ENCODE measurements at regions of chr7 and their contacts with region 1.

Region 1: DNA sequence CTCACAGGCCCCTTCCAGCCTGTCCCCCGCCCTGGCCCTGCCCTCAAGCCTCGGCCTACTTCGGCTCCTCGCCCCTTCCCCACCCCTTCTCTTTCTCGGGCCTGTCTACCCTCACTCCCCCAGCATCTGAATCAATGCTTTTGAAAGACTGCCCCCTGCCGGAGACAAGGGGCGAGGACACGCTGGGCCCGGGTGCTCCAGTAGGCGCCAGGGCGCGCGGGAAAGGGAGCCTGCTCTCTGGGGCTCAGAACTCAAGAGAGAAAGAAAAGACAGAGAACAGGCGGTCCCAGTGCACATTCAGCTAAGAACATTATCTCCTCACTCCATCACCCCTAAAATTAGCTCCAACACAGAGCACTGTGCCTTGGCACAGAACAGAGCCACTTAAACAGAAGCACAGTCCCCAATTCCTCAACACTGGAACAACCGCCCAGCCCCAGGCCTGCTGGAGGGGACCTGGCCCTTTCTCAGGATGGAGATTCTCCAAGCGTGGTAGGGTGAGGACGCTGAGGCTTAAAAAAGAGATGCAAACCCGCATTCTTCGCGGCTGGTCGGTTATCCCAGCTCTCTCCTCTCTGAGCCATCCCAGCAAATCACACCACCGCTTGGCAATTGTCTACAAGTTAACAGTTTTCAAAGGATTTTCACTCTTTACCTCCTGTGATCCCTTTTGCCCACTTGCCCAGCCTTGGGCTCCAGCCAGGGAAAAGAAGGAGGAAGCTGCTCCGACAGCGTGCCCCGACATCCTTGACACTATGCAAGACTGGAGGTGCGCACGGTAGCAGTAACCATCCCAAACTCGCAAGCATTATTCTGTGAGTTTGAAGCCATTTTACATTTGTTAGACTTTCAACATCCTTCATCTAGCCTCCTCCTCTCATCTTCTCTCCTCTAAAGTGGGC is 2.1 kb downstream of the GIGYF1 start:
- DNase-seq: peak; percentile 88
- ATAC-seq: peak; percentile 77
- H3K4me3 Mint-ChIP-seq: peak overlapping the region; percentile 88
- H3K27ac Mint-ChIP-seq: peak overlapping the region; percentile 91
- H3K4me1 Mint-ChIP-seq: peaks cover 54% of the 10 kb centered on the region
- H3K27me3 Mint-ChIP-seq: no peaks in the 10 kb centered on the region
- CTCF ChIP-seq: peak; percentile 90

Region 2: DNA sequence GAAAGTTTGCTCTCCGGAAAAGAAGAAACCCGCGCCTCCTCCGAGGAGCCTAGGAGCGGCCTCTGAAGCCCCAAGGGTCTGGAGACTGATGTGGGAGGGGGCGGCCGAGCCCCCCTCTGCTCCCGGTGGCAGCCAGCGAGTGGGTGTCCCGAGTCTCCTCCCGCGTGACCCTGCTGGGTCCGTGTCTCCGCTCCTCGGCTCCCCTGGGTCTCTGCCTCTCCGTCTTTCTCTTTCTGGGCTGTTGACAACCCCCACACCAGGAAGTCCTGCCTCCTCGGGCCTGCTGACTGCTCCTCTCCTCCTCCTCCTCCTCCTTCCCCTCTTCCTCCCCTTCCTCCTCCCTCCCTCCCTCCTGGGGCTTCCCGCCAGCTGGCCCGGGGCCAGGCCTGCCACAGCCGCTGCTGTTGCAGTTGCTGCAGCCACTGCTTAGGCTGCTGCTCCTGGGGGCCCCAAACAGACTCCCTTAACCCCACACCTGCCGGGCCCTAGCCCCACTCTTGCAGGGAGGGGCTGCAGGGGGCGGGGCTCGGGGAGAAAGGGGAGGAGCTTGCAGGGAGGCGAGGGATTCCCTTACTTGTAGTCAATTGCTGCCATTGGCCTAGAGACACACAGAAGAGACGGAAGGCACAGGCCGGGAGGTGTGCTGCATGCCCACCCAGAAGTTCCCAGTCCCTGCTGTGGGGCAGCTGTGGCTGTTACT is 212.8 kb before region 1 on chr7 and contains the start of gene TSC22D4:
- CTCF ChIA-PET with region 1: interaction called, 3 read pairs
- POLR2A ChIA-PET with region 1: no interaction called
- intact Hi-C with region 1: loop called (anchors 10 kb)
- DNase-seq: peak; percentile 94
- ATAC-seq: peak; percentile 76
- H3K4me3 Mint-ChIP-seq: peak within 1 kb of the TSS; percentile 94
- H3K27ac Mint-ChIP-seq: peak within 1 kb of the TSS; percentile 95
- H3K4me1 Mint-ChIP-seq: peaks cover 40% of the 10 kb centered on the region
- H3K27me3 Mint-ChIP-seq: no peaks in the 10 kb centered on the region
- CTCF ChIP-seq: no peak
- total RNA-seq, gene TSC22D4: 92.6 to 94.2 TPM

Region 3: DNA sequence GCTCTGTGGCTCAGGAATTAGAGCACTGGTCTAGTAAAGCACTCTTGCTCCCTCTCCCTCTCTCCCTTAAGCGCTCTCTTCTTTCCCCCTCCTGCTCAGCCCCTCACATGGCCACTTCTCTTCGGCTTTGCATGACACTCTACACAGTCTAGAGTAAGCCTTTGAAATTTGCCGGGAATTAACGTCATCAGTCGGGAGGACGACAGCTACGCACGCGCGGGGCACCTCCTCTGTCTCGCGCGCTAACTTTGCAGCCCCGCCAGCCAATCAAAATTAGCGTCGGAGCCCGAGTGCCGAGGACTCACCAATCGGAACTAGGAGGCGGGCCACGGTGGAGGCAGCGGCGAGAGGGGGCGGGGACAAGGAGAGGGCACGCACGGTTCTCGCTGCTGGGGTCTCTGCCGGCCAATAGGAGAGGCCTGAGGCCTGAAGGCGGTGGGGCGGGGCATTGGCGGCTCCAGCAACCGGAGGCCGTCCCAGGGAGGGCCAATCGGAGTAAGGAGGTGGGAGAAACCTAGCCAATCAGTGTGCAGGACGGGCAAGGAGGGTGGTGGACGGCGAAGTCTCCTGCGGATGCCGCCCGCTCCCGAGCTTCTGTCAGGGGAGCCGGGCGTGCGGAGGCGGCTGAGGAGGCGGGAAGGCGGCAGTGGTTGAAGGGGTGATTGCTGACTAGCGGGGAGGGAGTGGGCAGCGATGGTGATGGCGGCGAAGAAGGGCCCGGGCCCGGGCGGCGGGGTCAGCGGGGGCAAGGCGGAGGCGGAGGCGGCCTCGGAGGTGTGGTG is 153.1 kb before region 1 on chr7 and contains the start of gene AGFG2:
- CTCF ChIA-PET with region 1: no interaction called
- POLR2A ChIA-PET with region 1: no interaction called
- intact Hi-C with region 1: no loop called
- DNase-seq: peak; percentile 100
- ATAC-seq: peak; percentile 97
- H3K4me3 Mint-ChIP-seq: peak within 1 kb of the TSS; percentile 91
- H3K27ac Mint-ChIP-seq: peak within 1 kb of the TSS; percentile 97
- H3K4me1 Mint-ChIP-seq: peaks cover 37% of the 10 kb centered on the region
- H3K27me3 Mint-ChIP-seq: no peaks in the 10 kb centered on the region
- CTCF ChIP-seq: no peak
- total RNA-seq, gene AGFG2: 45.6 to 45.8 TPM

Region 4: DNA sequence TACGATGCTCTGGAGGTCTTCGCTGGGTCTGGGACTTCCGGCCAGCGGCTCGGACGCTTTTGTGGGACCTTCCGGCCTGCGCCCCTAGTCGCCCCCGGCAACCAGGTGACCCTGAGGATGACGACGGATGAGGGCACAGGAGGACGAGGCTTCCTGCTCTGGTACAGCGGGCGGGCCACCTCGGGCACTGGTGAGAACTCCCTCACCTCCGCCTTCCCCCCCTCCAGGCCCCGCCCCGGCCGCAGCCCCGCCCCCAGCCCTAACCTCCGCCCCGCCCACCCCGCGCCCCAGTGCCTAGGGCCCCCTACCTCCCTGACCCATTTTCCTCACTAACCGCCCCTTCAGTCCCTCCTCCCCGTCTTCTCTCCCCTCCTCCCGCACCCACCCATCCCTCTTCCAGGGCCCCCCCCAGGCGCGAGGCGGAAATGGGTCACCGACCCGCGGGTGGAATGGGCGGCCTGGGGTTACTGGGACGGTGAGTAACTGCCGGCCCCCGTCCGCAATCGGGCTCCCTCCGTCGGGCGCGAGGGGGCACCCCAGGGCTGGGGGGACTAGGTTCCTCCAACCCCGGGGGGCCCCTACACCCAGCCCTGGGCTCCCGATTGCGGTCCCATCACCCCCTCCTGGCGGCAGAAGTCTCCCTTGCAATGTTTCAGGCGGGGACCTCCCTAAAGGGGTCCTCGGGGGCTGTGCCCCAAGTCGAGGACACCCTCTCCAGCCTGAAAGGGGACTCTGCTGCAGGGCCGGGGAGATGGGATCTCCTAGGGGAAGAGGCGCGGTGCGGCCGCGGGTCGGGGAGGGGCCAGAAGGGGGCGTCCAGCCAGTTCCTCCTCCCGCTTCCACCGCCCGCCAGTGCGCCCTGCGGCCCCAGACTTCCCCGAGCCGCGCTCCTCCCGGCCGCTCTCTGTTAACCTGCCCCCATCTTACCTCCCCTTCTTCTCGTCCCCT is 87.6 kb before region 1 on chr7:
- CTCF ChIA-PET with region 1: interaction called, 14 read pairs
- POLR2A ChIA-PET with region 1: no interaction called
- intact Hi-C with region 1: no loop called
- DNase-seq: peak; percentile 87
- ATAC-seq: peak; percentile 81
- H3K4me3 Mint-ChIP-seq: peak overlapping the region; percentile 78
- H3K27ac Mint-ChIP-seq: peak overlapping the region; percentile 82
- H3K4me1 Mint-ChIP-seq: peaks cover 19% of the 10 kb centered on the region
- H3K27me3 Mint-ChIP-seq: peaks cover 3% of the 10 kb centered on the region
- CTCF ChIP-seq: peak; percentile 72

Region 5: GRCh38 chr7:100626530-100627237 is 65.2 kb before region 1 on chr7:
- CTCF ChIA-PET with region 1: interaction called, 46 read pairs
- POLR2A ChIA-PET with region 1: no interaction called
- intact Hi-C with region 1: no loop called
- DNase-seq: peak; percentile 93
- ATAC-seq: peak; percentile 97
- H3K4me3 Mint-ChIP-seq: peak overlapping the region; percentile 72
- H3K27ac Mint-ChIP-seq: peak overlapping the region; percentile 81
- H3K4me1 Mint-ChIP-seq: peaks cover 23% of the 10 kb centered on the region
- H3K27me3 Mint-ChIP-seq: no peaks in the 10 kb centered on the region
- CTCF ChIP-seq: no peak

Region 6: GRCh38 chr7:100673300-100673941 is 18.5 kb before region 1 on chr7 and contains the start of gene GNB2:
- CTCF ChIA-PET with region 1: interaction called, 105 read pairs
- POLR2A ChIA-PET with region 1: interaction called, 94 read pairs
- intact Hi-C with region 1: no loop called
- DNase-seq: peak; percentile 99
- ATAC-seq: peak; percentile 75
- H3K4me3 Mint-ChIP-seq: peak within 1 kb of the TSS; percentile 94
- H3K27ac Mint-ChIP-seq: peak within 1 kb of the TSS; percentile 95
- H3K4me1 Mint-ChIP-seq: peaks cover 11% of the 10 kb centered on the region
- H3K27me3 Mint-ChIP-seq: no peaks in the 10 kb centered on the region
- CTCF ChIP-seq: no peak
- total RNA-seq, gene GNB2: 192 TPM

Measured in activated CD8-positive, alpha-beta T cell treated with anti-CD3 and anti-CD28 coated beads for 36 hours (primary cell).